Activated CD4-positive, alpha-beta memory T cell treated with anti-CD3 and anti-CD28 coated beads for 36 hours (primary cell): ENCODE measurements at regions of chr9 and their contacts with region 1.

Region 1: DNA sequence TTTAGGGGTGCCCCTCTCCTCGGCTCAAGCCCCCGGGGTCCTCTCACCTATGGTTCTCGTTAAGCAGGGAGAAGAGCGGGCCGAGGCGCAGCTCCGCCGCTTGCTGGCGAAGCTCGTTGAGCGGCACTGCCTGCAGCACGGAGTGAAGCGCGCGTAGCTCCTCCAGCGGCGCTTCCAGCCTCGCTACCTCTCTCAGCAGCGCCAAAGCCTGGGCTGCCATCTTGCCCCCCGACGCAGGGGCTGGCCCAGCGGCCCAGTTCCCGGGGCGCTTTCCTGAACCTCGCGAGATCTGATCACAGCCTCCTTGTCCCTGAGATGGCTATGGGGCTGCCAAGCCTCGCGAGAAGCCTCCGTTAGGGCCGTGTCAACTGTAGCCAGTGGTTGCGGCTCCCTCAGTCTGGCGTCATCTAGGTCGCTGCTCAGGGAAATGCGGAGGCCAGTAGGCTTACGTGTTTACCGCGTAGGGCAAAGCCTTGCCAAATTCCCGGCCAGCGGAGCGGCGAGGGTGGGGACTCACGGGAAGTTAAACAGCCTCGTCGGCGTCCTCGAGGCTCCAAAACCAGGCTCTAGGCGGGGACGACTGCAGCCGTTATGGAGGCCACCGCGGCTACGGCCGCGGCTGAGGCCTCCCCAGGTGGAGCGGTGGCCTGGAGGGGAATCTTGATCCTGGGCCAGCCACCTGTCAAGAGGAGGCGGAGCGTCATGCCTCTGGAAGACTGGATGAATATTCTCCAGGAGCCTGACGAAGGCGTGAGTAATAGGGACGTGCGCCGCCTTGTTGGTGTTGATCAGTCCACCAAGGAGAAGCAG is at the start of gene PSMD5:
- DNase-seq: peak; percentile 99
- H3K4me3 Mint-ChIP-seq: peak within 1 kb of the TSS; percentile 95
- H3K27ac Mint-ChIP-seq: peak within 1 kb of the TSS; percentile 95
- H3K4me1 Mint-ChIP-seq: peaks cover 79% of the 10 kb centered on the region
- H3K27me3 Mint-ChIP-seq: no peaks in the 10 kb centered on the region
- total RNA-seq, gene PSMD5: 69.7 to 71.0 TPM

Region 2: GRCh38 chr9:120348951-120349429 is 493.9 kb before region 1 on chr9:
- CTCF ChIA-PET with region 1: no interaction called
- POLR2A ChIA-PET with region 1: no interaction called
- intact Hi-C with region 1: no loop called
- DNase-seq: peak; percentile 18
- H3K4me3 Mint-ChIP-seq: no peak overlapping the region
- H3K27ac Mint-ChIP-seq: no peak overlapping the region
- H3K4me1 Mint-ChIP-seq: peaks cover 2% of the 10 kb centered on the region
- H3K27me3 Mint-ChIP-seq: peaks cover 3% of the 10 kb centered on the region

Region 3: DNA sequence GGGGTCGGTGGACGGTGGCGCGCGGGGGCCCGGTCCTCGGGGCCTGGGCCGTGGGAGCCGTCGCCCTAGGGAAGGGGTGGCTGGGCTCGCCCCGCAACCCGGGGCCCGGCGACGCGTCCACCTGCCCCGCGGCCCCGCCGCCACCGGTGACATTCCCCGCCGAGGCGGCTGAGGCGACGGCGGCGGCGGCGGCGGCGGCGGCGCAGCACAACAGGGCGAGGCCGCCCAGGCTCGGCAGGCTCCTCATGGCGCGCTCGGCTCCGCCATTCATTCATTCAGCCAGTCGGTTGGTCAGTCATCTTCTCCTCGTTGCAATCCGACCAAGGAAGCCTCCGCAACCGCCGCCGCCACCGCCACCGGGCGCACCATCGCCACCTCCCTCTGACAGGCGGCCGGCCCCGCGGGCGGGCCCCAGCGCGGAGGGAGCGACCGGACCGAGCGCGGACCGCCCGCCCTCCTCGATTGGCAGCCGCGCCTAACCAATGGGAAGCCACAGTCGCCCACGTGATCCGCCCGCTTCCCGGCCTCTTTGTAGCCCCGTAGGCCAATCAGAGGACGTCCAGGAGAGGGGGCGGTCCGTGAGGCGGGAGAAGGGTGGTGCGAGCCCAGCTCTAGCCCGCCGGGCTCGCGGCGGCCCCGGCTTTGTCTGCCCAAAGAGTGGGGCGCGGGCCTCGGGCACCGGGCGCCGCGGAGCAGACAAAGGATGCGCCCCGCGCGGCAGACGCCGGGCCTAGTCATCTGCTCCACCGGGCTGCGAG is 128.6 kb before region 1 on chr9 and contains the start of gene MEGF9:
- CTCF ChIA-PET with region 1: no interaction called
- POLR2A ChIA-PET with region 1: no interaction called
- intact Hi-C with region 1: loop called (anchors 2 kb)
- DNase-seq: peak; percentile 98
- H3K4me3 Mint-ChIP-seq: peak within 1 kb of the TSS; percentile 84
- H3K27ac Mint-ChIP-seq: peak within 1 kb of the TSS; percentile 65
- H3K4me1 Mint-ChIP-seq: peaks cover 31% of the 10 kb centered on the region
- H3K27me3 Mint-ChIP-seq: no peaks in the 10 kb centered on the region
- total RNA-seq, gene MEGF9: 4.4 to 4.6 TPM

Region 4: GRCh38 chr9:120868676-120869359 is 25.9 kb after region 1 on chr9:
- CTCF ChIA-PET with region 1: interaction called, 7 read pairs
- POLR2A ChIA-PET with region 1: interaction called, 25 read pairs
- intact Hi-C with region 1: loop called (anchors 1 kb)
- DNase-seq: peak; percentile 97
- H3K4me3 Mint-ChIP-seq: peak overlapping the region; percentile 80
- H3K27ac Mint-ChIP-seq: peak overlapping the region; percentile 87
- H3K4me1 Mint-ChIP-seq: peaks cover 46% of the 10 kb centered on the region
- H3K27me3 Mint-ChIP-seq: no peaks in the 10 kb centered on the region

Region 5: DNA sequence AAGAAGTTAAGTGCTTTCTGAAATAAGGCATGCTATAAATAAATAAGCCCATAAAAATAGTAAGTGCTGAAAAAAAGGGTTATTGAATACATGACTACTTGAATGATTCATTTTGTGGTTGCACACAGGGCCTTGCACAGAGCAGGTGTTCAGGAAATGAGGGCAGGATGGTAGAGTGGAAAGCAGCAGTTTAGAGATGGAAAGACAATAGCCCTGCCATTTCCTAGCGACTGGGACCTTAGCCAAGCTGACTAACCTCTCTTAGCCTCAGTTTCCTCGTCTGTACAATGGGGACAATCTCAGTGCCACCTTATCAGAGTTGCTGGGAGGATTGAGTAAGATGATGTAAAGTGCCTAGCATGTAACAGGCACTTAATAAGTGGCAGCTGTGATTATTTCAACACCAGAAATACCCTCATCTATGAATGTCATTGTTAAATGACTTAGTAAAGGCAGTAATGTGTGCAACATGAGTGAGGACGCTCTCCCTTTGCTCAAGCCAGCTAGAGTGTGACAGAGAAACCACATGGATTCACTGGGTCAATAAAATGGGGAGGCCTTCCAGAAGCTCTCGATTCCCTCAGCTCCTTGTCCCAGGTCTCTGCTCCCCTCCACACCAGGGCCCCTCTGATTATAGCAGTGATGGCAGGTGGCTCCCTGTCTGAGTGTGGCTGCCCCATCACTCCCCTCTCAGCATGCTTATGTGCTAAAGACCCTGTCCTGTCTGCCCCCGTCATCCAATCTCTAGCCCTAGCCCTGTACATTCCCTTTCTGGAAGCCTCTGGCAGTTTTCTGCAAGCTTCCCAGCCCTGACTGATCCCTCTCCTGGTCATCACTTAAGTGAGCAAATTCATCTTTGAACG is 50.1 kb after region 1 on chr9:
- CTCF ChIA-PET with region 1: interaction called, 5 read pairs
- POLR2A ChIA-PET with region 1: interaction called, 17 read pairs
- intact Hi-C with region 1: loop called (anchors 1 kb)
- DNase-seq: peak; percentile 81
- H3K4me3 Mint-ChIP-seq: peak overlapping the region; percentile 62
- H3K27ac Mint-ChIP-seq: peak overlapping the region; percentile 95
- H3K4me1 Mint-ChIP-seq: peaks cover 84% of the 10 kb centered on the region
- H3K27me3 Mint-ChIP-seq: no peaks in the 10 kb centered on the region

Region 6: GRCh38 chr9:120928483-120929228 is 85.8 kb after region 1 on chr9:
- CTCF ChIA-PET with region 1: interaction called, 4 read pairs
- POLR2A ChIA-PET with region 1: interaction called, 83 read pairs
- intact Hi-C with region 1: loop called (anchors 1 kb)
- DNase-seq: peak; percentile 86
- H3K4me3 Mint-ChIP-seq: peak overlapping the region; percentile 80
- H3K27ac Mint-ChIP-seq: peak overlapping the region; percentile 99
- H3K4me1 Mint-ChIP-seq: peaks cover 64% of the 10 kb centered on the region
- H3K27me3 Mint-ChIP-seq: no peaks in the 10 kb centered on the region

Region 7: GRCh38 chr9:121074635-121075385 is 231.9 kb after region 1 on chr9 and contains the start of gene CNTRL:
- CTCF ChIA-PET with region 1: no interaction called
- POLR2A ChIA-PET with region 1: no interaction called
- intact Hi-C with region 1: loop called (anchors 2 kb)
- DNase-seq: peak; percentile 97
- H3K4me3 Mint-ChIP-seq: peak within 1 kb of the TSS; percentile 100
- H3K27ac Mint-ChIP-seq: peak within 1 kb of the TSS; percentile 85
- H3K4me1 Mint-ChIP-seq: peaks cover 46% of the 10 kb centered on the region
- H3K27me3 Mint-ChIP-seq: no peaks in the 10 kb centered on the region
- total RNA-seq, gene CNTRL: 60.0 to 65.1 TPM

Region 8: GRCh38 chr9:121201738-121202533 is 359.0 kb after region 1 on chr9 and contains the start of gene RAB14:
- CTCF ChIA-PET with region 1: no interaction called
- POLR2A ChIA-PET with region 1: no interaction called
- intact Hi-C with region 1: loop called (anchors 5 kb)
- DNase-seq: peak; percentile 100
- H3K4me3 Mint-ChIP-seq: peak within 1 kb of the TSS; percentile 90
- H3K27ac Mint-ChIP-seq: peak within 1 kb of the TSS; percentile 95
- H3K4me1 Mint-ChIP-seq: peaks cover 39% of the 10 kb centered on the region
- H3K27me3 Mint-ChIP-seq: no peaks in the 10 kb centered on the region
- total RNA-seq, gene RAB14: 58.2 to 58.5 TPM